Activated CD8-positive, alpha-beta T cell treated with anti-CD3 and anti-CD28 coated beads, Interleukin-2, amount 10 ng/mL, durations not matched to agents 7 days and 5 days (primary cell): ENCODE measurements at regions of chr2 and their contacts with region 1.

Region 1: GRCh38 chr2:201231781-201232466 is 28.4 kb upstream of the CASP8 start:
- DNase-seq: peak; percentile 96
- ATAC-seq: peak; percentile 55
- H3K4me3 Mint-ChIP-seq: peak overlapping the region; percentile 98
- H3K27ac Mint-ChIP-seq: peak overlapping the region; percentile 89
- H3K4me1 Mint-ChIP-seq: peaks cover 53% of the 10 kb centered on the region
- H3K27me3 Mint-ChIP-seq: no peaks in the 10 kb centered on the region

Region 2: DNA sequence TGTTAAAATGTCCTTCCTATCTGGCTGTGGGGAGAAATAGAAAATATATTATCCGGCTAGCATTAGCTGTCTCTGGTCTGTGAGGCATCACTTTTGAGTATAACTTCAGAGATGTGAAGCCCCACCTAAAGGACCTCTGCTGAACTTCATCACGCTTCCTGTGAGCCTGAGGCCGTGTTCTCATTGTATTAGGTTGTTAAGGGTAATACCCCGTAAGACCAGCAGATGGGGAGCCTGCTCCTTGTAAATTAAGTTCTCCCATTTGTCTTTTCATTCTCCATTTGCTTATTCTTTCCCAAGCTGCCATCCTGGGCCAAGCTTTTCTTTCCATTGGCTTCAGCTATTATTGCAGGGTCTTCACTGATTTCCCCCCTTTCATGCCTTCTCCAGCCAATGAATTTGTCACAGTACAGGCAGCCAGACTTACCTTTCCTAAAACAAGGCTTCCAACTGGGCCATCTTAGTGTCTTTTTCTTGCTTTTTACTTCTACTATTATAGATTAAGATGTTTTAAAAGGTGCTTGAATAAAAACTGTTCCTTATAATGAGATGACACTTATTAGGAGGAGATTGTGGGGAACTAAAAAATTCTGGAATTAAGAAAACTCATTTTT is 330.4 kb before region 1 on chr2:
- CTCF ChIA-PET with region 1: interaction called, 38 read pairs
- POLR2A ChIA-PET with region 1: interaction called, 4 read pairs
- DNase-seq: peak; percentile 89
- ATAC-seq: peak; percentile 100
- H3K4me3 Mint-ChIP-seq: no peak overlapping the region
- H3K27ac Mint-ChIP-seq: peak overlapping the region; percentile 25
- H3K4me1 Mint-ChIP-seq: peaks cover 24% of the 10 kb centered on the region
- H3K27me3 Mint-ChIP-seq: no peaks in the 10 kb centered on the region

Region 3: DNA sequence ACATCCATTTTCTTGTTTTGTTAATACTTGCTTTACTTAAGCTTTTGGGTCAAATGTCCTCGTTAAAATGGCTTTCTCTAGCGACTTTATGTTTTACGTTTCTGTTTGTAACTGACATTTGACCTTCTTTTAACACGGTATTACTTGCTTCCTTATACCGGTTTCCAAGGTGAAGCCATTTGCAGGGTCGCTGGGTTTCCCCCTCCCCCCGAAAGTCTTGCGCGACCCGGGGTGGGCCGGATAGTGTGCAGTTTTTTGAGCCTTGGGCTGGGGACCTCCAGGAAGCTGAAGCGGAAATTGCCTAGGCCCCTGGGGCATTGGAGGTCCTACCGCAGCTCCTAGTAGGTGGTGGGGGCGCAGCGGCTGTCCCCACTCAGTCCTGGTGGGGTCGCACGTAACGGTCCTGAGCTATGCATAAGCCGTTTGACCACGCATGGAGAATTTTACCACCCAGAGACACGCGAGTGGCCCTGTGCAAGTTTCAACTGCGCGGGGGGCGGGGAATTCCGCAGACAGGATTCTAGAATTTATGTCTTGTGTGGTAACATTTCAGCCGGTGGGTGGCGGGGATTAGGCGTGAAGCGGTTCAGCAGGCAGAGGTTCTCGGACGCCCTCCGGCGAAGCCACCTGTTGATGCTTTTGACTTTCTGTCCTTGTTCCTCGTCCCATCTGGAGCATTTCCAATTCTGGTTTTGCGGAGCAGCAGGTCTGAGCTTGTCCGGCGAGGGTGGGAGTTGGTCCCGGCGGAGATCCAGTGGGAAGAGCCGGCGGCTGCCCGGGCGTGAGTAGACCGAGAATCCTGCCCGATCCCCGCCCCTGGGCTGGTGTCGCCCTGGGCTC is 113.6 kb before region 1 on chr2:
- CTCF ChIA-PET with region 1: interaction called, 14 read pairs
- POLR2A ChIA-PET with region 1: interaction called, 34 read pairs
- DNase-seq: peak; percentile 93
- ATAC-seq: peak; percentile 45
- H3K4me3 Mint-ChIP-seq: peak overlapping the region; percentile 97
- H3K27ac Mint-ChIP-seq: peak overlapping the region; percentile 99
- H3K4me1 Mint-ChIP-seq: peaks cover 56% of the 10 kb centered on the region
- H3K27me3 Mint-ChIP-seq: no peaks in the 10 kb centered on the region

Region 4: DNA sequence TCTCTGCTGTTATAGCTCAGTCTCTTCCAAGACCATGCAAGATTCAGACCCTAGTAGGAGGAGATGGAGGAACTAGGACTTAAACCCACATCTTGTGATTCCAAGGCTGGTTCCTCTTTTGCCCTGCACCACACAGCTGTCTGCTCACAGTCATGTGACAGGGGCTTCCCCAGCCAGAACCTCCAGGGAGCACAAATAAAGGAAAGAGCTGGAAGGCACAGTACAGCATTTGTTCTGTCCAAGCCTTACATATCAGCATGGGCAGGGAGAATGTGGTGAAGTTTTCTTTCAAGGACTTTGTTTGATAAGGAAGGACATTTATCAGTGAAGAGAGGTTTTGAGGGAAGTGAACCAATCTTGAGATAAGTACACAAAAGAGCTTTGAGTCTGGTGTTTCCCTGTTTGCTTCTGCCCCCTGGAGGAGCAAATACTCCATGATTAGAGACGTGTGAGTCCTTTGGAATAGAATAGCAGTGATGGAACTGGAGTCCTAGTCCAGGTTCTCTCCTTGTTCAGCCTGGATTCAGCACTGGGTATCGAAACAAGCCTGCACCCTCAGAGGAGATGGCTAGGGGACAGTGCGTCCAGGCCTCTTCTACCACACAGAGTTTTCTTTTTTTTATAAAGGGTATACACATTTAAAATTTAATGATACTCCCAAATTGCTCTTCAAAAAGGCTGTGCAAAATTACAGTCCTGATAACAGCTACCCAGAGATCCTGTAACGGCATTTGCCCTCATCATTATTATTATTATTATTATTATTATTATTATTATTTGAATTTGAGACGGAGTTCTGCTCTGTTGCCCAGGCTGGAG is 73.6 kb before region 1 on chr2:
- CTCF ChIA-PET with region 1: interaction called, 27 read pairs
- POLR2A ChIA-PET with region 1: interaction called, 6 read pairs
- DNase-seq: peak; percentile 80
- ATAC-seq: peak; percentile 90
- H3K4me3 Mint-ChIP-seq: no peak overlapping the region
- H3K27ac Mint-ChIP-seq: peak overlapping the region; percentile 76
- H3K4me1 Mint-ChIP-seq: peaks cover 11% of the 10 kb centered on the region
- H3K27me3 Mint-ChIP-seq: no peaks in the 10 kb centered on the region

Region 5: GRCh38 chr2:201208563-201209252 is 23.2 kb before region 1 on chr2:
- CTCF ChIA-PET with region 1: interaction called, 22 read pairs
- POLR2A ChIA-PET with region 1: interaction called, 3 read pairs
- DNase-seq: no peak
- ATAC-seq: no peak
- H3K4me3 Mint-ChIP-seq: no peak overlapping the region
- H3K27ac Mint-ChIP-seq: no peak overlapping the region
- H3K4me1 Mint-ChIP-seq: peaks cover 28% of the 10 kb centered on the region
- H3K27me3 Mint-ChIP-seq: no peaks in the 10 kb centered on the region

Region 6: GRCh38 chr2:201263779-201264178 is 31.9 kb after region 1 on chr2:
- CTCF ChIA-PET with region 1: interaction called, 100 read pairs
- POLR2A ChIA-PET with region 1: interaction called, 221 read pairs
- DNase-seq: peak; percentile 33
- ATAC-seq: no peak
- H3K4me3 Mint-ChIP-seq: peak overlapping the region; percentile 69
- H3K27ac Mint-ChIP-seq: peak overlapping the region; percentile 36
- H3K4me1 Mint-ChIP-seq: peaks cover 68% of the 10 kb centered on the region
- H3K27me3 Mint-ChIP-seq: no peaks in the 10 kb centered on the region